BJ (cell line): ENCODE measurements at regions of chr1 and their contacts with region 1.

Region 1: DNA sequence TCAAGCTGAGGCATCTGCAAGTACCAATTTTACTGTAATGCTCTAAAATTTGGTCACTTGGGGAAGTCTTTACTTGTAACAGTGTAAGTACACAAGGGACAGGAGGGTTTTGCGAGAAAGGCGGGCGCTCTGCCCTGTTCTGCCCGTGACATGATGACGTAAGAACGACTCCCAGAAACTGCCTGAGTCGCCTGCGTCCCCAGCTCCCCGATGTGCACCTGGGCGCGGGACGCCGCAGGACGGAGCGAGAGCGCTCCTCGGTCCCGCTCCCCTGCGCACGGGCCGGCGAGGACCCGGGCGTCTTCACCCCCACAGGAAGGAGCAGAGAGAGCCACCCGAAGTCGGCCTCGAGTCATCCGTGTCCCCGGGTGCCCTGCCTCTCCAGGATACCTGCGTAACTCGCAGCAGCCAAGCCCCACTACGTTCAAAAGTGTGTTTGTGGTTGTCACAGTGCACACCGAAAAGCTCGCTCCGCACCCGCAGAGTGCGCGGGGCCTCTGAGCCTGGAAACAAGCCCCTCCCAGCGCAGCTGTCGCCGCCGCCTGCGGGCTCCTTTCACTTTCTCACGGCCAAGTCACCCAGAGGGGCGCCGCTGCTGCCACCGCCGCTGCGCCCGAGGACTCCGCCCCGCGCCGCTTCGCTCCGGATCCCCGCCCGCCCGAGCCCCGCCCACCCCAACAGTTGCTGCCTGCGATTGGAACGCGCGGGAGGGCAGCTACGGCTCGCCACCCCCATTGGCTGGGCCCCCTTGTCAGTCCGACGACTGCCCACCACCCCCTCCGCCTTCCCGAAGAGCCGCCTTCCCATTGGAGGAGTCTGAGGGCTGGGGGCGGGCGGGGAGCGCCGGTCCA is 3.2 kb upstream of the ZBTB18 start:
- DNase-seq: peak; percentile 95
- H3K4me3 ChIP-seq: peak overlapping the region; percentile 68
- H3K27me3 ChIP-seq: peaks cover 2% of the 10 kb centered on the region
- CTCF ChIP-seq: no peak

Region 2: GRCh38 chr1:244065960-244066388 is 18.1 kb after region 1 on chr1:
- CTCF ChIA-PET with region 1: no interaction called
- POLR2A ChIA-PET with region 1: interaction called, 11 read pairs
- DNase-seq: no peak
- H3K4me3 ChIP-seq: no peak overlapping the region
- H3K27me3 ChIP-seq: no peaks in the 10 kb centered on the region
- CTCF ChIP-seq: no peak

Region 3: DNA sequence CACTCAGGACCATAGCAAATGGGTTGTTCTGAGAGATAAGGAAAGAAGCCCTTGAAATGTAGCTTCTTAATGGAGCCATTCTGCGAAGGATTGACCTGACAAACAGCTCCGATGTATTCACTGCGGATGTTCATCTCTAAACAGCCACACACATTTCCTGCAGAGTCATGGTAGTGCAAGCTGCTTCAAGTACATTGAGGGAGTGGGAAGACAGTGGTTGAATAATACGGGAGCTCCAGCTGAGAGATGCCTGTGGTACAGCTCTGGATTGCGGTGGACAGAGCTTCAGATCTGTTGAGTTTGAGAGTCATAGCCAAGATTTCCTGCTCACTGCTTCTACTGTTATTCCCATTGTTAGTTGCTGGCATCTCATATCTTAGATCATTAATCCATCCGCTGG is 89.9 kb after region 1 on chr1:
- CTCF ChIA-PET with region 1: no interaction called
- POLR2A ChIA-PET with region 1: no interaction called
- DNase-seq: no peak
- H3K4me3 ChIP-seq: no peak overlapping the region
- H3K27me3 ChIP-seq: no peaks in the 10 kb centered on the region
- CTCF ChIP-seq: no peak